Mammary epithelial cell (primary cell): ENCODE measurements at regions of chr2 and their contacts with region 1.

Region 1: GRCh38 chr2:133780099-133780839 is 212.0 kb upstream of the NCKAP5 start:
- DNase-seq: peak; percentile 70
- H3K4me3 ChIP-seq: no peak overlapping the region
- H3K27ac ChIP-seq: no peak overlapping the region
- H3K4me1 ChIP-seq: no peaks in the 10 kb centered on the region
- H3K27me3 ChIP-seq: no peaks in the 10 kb centered on the region
- CTCF ChIP-seq: peak; percentile 81

Region 2: DNA sequence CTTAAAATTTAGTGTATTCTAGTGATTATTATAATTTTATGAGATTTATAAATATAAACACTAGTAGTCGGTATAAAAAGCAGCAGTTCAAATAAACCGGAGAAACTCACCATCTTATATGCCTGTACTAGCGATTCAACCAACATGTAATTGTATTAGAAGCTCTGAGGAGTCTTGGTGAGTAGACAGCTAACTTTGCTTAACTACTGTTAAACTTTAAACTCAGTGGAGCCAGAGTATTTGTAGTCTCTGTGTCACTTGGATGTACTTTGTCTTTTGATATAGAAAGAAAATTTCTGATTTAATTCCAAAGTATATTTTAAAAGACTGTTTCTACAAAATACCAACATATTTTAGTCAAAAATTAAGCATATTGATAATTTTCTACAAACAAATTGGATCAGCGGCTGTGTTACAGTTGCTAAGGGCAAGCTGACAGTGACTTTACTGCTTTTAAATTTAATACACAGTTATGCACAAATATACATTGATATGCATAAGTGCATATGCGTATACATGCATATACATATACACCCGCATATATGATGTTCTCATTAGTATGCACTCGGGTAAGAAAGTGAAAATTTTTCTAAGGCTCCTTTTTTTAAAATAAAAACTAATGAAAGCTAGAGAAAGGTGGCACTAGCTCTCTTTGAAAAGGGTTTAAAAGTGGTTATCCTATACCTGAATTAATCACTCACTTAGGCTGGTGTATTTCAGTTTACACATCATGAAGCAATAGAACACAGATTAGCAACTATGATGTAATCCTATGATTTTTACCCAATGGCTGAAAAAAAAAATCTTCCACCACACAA is 586.5 kb before region 1 on chr2:
- CTCF ChIA-PET with region 1: no interaction called
- dilution Hi-C with region 1: no loop called
- in situ Hi-C with region 1: loop called in 1 of 2 experiments (anchors 25 kb)
- intact Hi-C with region 1: no loop called
- DNase-seq: peak; percentile 12
- H3K4me3 ChIP-seq: no peak overlapping the region
- H3K27ac ChIP-seq: no peak overlapping the region
- H3K4me1 ChIP-seq: peaks cover 11% of the 10 kb centered on the region
- H3K27me3 ChIP-seq: no peaks in the 10 kb centered on the region
- CTCF ChIP-seq: no peak

Region 3: GRCh38 chr2:133817680-133818579 is 37.7 kb after region 1 on chr2:
- CTCF ChIA-PET with region 1: no interaction called
- dilution Hi-C with region 1: no loop called
- in situ Hi-C with region 1: no loop called
- intact Hi-C with region 1: no loop called
- DNase-seq: peak; percentile 91
- H3K4me3 ChIP-seq: no peak overlapping the region
- H3K27ac ChIP-seq: peak overlapping the region; percentile 42
- H3K4me1 ChIP-seq: peaks cover 41% of the 10 kb centered on the region
- H3K27me3 ChIP-seq: no peaks in the 10 kb centered on the region
- CTCF ChIP-seq: no peak